ENCODE measurements at regions of chr13 and their contacts with region 1.

Region 1: DNA sequence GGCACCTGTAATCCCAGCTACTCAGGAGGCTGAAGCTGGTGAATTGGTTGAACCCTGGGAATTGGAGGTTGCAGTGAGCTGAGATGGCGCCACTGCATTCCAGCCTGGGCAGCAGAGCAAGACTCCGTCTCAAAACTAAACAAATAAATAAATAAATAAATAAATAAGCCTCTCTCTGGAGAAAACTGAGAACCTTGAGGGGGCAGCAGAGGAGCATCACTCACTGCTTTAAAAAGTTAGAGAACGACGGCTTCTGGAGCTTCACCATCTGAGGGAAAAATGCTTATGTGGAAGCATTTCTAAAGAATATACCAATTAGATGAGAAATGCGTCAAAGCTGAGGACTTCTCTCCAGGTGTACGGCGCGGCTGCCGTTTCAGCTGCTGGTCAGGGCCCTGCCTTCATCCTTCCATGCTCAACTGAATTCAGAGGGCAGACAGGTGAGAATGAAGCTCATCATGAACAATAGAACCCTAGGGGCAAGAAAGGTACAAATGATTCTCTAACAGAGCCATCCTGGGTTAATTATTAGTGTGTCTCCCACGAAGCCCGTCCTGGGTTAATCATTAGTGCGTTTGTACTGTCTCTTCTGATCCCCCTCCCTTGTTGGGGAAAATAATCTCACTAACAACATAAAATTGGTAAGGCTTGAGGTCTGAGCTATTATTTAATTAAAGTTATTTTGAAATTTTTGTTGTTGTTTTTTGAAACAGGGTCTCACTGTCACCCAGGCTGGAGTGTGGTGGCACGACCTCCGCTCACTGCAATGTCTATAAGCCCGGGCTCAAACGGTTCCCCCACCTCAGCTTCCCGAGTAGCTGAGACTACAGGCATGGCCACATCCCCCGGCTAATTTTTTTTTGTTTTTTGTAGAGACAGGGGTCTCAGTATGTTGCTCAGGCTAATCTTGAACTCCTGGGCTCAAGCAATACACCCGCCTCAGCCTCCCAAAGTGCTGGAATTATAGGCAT is 80.1 kb downstream of the IPO5 start:
- DNase-seq: peak; percentile 86
- H3K4me3 ChIP-seq: no peak overlapping the region
- H3K27ac ChIP-seq: no peak overlapping the region
- H3K4me1 ChIP-seq: peaks cover 16% of the 10 kb centered on the region
- H3K27me3 ChIP-seq: no peaks in the 10 kb centered on the region

Region 2: GRCh38 chr13:98405107-98405571 is 371.6 kb after region 1 on chr13:
- in situ Hi-C with region 1: loop called (anchors 25 kb)
- DNase-seq: peak; percentile 43
- H3K4me3 ChIP-seq: no peak overlapping the region
- H3K27ac ChIP-seq: no peak overlapping the region
- H3K4me1 ChIP-seq: peaks cover 6% of the 10 kb centered on the region
- H3K27me3 ChIP-seq: no peaks in the 10 kb centered on the region